Transverse colon (tissue), 4 donors: ENCODE measurements at regions of chr9 and their contacts with region 1.

Region 1: DNA sequence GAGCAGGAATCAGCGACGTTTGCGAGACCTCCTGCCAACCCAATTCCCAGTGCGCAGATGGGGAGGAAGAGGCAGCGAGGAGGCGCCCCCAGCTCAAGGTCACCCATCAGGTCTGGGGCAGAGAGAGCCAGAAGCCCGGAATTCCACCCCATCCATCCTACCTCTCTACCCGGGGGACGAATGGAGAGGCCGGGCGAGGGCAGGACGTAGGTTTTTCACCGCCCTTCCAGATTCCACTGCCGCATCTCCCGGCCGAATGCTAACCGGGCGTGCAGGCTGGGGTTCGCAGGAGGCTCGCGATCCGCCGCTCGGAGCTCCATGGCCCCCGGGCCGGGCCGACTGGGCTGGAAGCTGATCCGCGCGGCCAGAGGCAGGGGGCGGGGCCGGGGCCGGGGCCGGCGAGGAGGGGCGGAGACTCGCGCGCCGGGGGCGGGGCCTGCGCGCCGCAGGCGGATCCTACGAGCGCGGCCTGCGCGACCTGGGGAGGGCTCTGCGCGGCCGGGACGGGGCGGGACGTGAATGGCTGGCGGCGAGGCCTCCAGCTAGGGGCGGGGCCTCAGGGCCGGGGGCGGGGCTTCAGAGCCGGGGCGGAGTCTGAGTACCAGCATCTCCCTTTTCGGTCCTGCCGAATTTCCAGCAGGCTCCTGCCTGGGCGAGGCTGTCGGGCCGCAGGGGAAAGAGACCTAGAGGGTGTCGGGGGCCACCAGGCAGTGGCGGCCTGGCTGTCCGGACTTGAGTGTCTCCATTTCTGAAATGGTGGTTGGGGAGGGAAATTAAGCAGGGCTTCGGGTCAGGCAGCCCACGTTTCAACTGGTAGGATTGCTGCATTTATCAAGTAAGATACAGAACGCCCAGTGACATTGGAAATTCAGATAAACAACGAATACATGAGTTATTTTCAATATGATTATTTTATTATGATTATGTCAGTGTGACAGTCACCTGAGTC is at the start of gene ST6GALNAC4:
- DNase-seq: peak; percentile 96
- H3K4me3 ChIP-seq: peak within 1 kb of the TSS; percentile 42 to 54 (median 53)
- H3K27ac ChIP-seq: peak within 1 kb of the TSS; percentile 58 to 84 (median 71)
- H3K4me1 ChIP-seq: peaks cover 27 to 72% (median 62%) of the 10 kb centered on the region in 4 donors
- H3K27me3 ChIP-seq: peaks cover 3% of the 10 kb centered on the region
- CTCF ChIP-seq: no peak
- EP300 ChIP-seq: no peak
- POLR2A ChIP-seq: peak; percentile 28
- total RNA-seq, gene ST6GALNAC4: 16.7 to 66.1 (median 47.3) TPM

Region 2: DNA sequence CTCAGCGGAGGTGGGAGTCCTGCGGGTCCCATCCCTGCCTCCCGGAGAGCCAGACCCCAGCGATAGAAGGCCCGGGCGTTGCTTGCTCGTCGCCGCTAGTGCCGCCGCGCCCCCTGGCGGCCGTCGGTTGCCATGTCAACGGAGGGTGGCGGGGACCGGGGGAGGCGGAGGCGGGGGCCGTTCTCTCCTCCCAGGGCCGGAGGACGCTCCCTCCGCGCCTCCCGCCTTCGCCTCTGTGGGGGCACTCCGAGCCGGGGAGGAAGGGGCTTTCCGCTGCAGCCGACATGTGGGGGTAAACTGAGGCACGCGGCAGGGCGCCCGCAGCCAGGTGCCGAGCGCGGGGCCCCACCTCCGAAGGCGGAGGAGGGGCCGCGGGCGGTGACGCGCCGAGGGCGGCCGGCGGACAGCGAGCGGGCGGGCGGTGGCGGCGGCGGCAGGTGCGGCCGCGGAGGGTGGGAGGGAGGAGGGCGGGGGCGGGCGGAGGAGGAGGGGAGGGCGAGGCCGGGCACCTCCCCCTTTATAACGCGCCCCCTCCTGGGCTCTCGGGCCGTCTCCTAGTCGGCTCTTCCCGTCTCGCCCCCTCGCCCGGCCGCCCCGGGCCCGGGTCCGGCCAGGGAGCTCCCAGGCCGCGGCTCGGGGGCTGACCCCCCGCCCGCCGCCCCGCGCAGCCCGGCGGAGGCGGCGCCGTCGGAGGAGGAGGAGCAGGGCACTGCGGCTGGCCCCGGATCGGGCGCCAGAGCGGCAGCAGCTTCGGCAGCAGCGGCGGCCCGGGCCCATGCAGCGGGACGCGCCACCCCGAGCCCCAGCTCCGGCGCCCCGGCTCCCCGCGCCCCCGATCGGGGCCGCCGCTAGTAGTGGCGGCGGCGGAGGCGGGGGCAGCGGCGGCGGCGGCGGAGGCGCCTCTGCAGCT is 131.7 kb before region 1 on chr9:
- in situ Hi-C with region 1: loop called in 1 of 4 experiments (anchors 25 kb)
- intact Hi-C with region 1: no loop called
- DNase-seq: peak; percentile 91
- H3K4me3 ChIP-seq: peak overlapping the region; percentile 50 to 100 (median 98)
- H3K27ac ChIP-seq: peak overlapping the region; percentile 96 to 99 (median 96)
- H3K4me1 ChIP-seq: peaks cover 10 to 34% (median 14%) of the 10 kb centered on the region in 4 donors
- H3K27me3 ChIP-seq: no peaks in the 10 kb centered on the region
- CTCF ChIP-seq: peak; percentile 93 to 98 (median 97)
- EP300 ChIP-seq: no peak
- POLR2A ChIP-seq: no peak